ENCODE measurements at regions of chr3 and their contacts with region 1.

Region 1: GRCh38 chr3:86880066-86880465 is 110.9 kb downstream of the VGLL3 start:
- DNase-seq: no peak
- H3K4me3 ChIP-seq: no peak overlapping the region
- CTCF ChIP-seq: no peak
- POLR2A ChIP-seq: no peak

Region 2: GRCh38 chr3:87719060-87719459 is 839.0 kb after region 1 on chr3:
- intact Hi-C with region 1: no loop called
- DNase-seq: no peak
- H3K4me3 ChIP-seq: no peak overlapping the region
- CTCF ChIP-seq: no peak
- POLR2A ChIP-seq: no peak

Region 3: DNA sequence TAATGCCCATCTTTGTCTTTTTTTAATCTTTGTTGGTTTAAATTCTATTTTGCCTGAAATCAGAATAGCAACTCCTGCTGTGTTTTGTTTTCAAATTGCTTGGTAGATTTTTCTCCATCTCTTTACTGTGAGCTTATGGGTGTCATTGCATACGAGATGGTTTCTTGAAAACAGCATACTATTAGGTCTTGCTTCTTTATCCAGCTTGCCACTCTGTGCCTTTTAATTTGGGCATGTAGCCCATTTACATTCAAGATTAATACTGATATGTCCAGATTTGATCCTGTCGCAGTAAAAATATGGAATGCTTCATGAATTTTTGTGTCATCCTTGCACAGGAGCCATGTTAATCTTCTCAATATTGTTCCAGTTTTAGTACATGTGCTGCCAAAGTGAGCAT is 862.2 kb after region 1 on chr3:
- intact Hi-C with region 1: no loop called
- DNase-seq: no peak
- H3K4me3 ChIP-seq: no peak overlapping the region
- CTCF ChIP-seq: no peak
- POLR2A ChIP-seq: no peak

Region 4: GRCh38 chr3:87810452-87811016 is 930.5 kb after region 1 on chr3:
- intact Hi-C with region 1: loop called (anchors 5 kb)
- DNase-seq: no peak
- H3K4me3 ChIP-seq: no peak overlapping the region
- CTCF ChIP-seq: no peak
- POLR2A ChIP-seq: no peak